ENCODE measurements at regions of chr19 and their contacts with region 1.

Region 1: GRCh38 chr19:46076951-46077816 is 36.4 kb upstream of the IGFL4 start:
- DNase-seq: peak in 2 of 5 donors; percentile 12 to 33
- ATAC-seq: peak in 3 of 4 donors; percentile 60 to 81 (median 67)
- H3K4me3 ChIP-seq: peak overlapping the region in 2 of 12 donors; percentile 3 to 13
- H3K27ac ChIP-seq: no peak overlapping the region
- H3K4me1 ChIP-seq: peaks cover 0 to 8% (median 0%) of the 10 kb centered on the region in 12 donors
- H3K27me3 ChIP-seq: peaks cover 16 to 84% (median 49%) of the 10 kb centered on the region in 9 donors
- CTCF ChIP-seq: peak; percentile 20 to 65 (median 52)
- POLR2A ChIP-seq: no peak

Region 2: DNA sequence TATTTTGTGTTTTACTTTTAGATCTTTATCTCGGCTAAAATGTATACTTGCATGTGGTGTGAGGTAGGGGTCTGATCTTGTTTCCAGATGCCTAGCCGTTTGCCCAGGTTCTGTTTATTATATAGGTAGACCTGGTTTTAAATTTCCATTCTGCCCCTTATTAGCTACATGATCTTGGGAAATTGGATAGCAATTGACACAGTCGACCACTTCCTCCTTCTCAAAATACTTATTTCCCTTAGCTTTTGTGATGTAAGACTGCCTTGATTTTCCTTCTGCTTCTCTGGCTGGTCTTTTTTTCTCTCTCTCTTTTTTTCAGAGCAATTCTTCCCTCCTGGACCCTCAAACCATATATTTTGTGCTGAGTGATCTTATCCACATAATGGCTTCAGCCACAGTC is 51.3 kb before region 1 on chr19:
- intact Hi-C with region 1: loop called in 2 of 10 experiments (anchors 2 to 5 kb)
- DNase-seq: no peak
- ATAC-seq: no peak
- H3K4me3 ChIP-seq: no peak overlapping the region
- H3K27ac ChIP-seq: no peak overlapping the region
- H3K4me1 ChIP-seq: no peaks in the 10 kb centered on the region
- H3K27me3 ChIP-seq: peaks cover 7 to 64% (median 27%) of the 10 kb centered on the region in 9 donors
- CTCF ChIP-seq: no peak
- POLR2A ChIP-seq: no peak

Region 3: GRCh38 chr19:46030812-46031550 is 46.2 kb before region 1 on chr19:
- intact Hi-C with region 1: loop called in 2 of 10 experiments (anchors 2 to 5 kb)
- DNase-seq: no peak
- ATAC-seq: no peak
- H3K4me3 ChIP-seq: no peak overlapping the region
- H3K27ac ChIP-seq: no peak overlapping the region
- H3K4me1 ChIP-seq: no peaks in the 10 kb centered on the region
- H3K27me3 ChIP-seq: peaks cover 0 to 39% (median 8%) of the 10 kb centered on the region in 9 donors
- CTCF ChIP-seq: no peak
- POLR2A ChIP-seq: no peak

Region 4: GRCh38 chr19:46186101-46187100 is 109.2 kb after region 1 on chr19:
- intact Hi-C with region 1: loop called (anchors 1 to 5 kb)
- DNase-seq: no peak
- ATAC-seq: no peak
- H3K4me3 ChIP-seq: no peak overlapping the region
- H3K27ac ChIP-seq: no peak overlapping the region
- H3K4me1 ChIP-seq: no peaks in the 10 kb centered on the region
- H3K27me3 ChIP-seq: peaks cover 0 to 47% (median 13%) of the 10 kb centered on the region in 9 donors
- CTCF ChIP-seq: no peak
- POLR2A ChIP-seq: no peak

Region 5: DNA sequence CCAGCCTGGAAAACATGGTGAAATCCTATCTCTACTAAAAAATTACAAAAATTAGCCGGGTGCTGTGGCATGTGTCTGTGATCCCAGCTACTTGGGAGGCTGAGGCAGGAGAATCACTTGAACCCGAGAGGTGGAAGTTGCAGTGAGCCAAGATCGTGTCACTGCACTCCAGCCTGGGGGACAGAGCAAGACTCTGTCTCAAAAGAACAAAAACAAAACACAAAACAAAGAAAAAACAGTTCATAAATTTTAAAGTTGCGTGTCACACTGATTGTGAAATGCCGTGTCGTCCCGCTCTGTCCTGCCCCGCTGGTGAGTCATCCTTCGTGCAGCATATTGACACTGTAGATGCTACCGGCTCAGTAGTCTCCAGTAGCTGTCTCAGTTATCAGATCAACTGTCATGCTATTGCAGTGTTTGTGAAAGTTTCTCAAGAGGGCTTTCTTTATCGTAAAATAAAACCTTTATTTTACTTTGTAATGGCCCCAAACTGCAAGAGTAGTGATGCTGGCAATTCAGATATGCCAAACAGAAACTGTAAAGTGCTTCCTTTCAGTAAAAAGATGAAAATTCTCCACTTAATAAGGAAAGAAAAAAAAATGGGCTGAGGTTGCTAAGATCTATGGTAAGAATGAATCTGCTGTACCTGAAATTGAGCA is 115.9 kb after region 1 on chr19:
- intact Hi-C with region 1: loop called (anchors 1 to 5 kb)
- DNase-seq: peak in 1 of 5 donors; percentile 39
- ATAC-seq: peak in 2 of 4 donors; percentile 48 to 55
- H3K4me3 ChIP-seq: no peak overlapping the region
- H3K27ac ChIP-seq: no peak overlapping the region
- H3K4me1 ChIP-seq: peaks cover 0 to 18% (median 0%) of the 10 kb centered on the region in 12 donors
- H3K27me3 ChIP-seq: peaks cover 0 to 52% (median 12%) of the 10 kb centered on the region in 9 donors
- CTCF ChIP-seq: no peak
- POLR2A ChIP-seq: no peak

Region 6: GRCh38 chr19:46265217-46265828 is 188.1 kb after region 1 on chr19:
- intact Hi-C with region 1: loop called in 8 of 10 experiments (anchors 1 to 5 kb)
- DNase-seq: peak in 4 of 5 donors; percentile 38 to 54 (median 48)
- ATAC-seq: peak; percentile 71 to 89 (median 74)
- H3K4me3 ChIP-seq: no peak overlapping the region
- H3K27ac ChIP-seq: no peak overlapping the region
- H3K4me1 ChIP-seq: peaks cover 0 to 4% (median 0%) of the 10 kb centered on the region in 12 donors
- H3K27me3 ChIP-seq: peaks cover 0 to 38% (median 7%) of the 10 kb centered on the region in 9 donors
- CTCF ChIP-seq: peak; percentile 79 to 88 (median 86)
- POLR2A ChIP-seq: no peak